Activated T-helper 2 cell treated with anti-CD3 and anti-CD28 coated beads, Interferon-gamma antibody, Interleukin-2, Interleukin-4, amounts not matched to agents 10 μg/mL and 5 μg/mL and 100 μg/mL, durations not matched to agents 14 hours and 24 hours and 36 hours (primary cell): ENCODE measurements at regions of chr2 and their contacts with region 1.

Region 1: GRCh38 chr2:216666461-216667233 is 28.7 kb downstream of the IGFBP5 start:
- DNase-seq: peak; percentile 59
- H3K4me3 Mint-ChIP-seq: no peak overlapping the region
- H3K27ac Mint-ChIP-seq: no peak overlapping the region
- H3K4me1 Mint-ChIP-seq: no peaks in the 10 kb centered on the region
- H3K27me3 Mint-ChIP-seq: peaks cover 8% of the 10 kb centered on the region

Region 2: GRCh38 chr2:216412022-216412999 is 254.3 kb before region 1 on chr2 and contains the start of gene SMARCAL1:
- intact Hi-C with region 1: loop called (anchors 5 kb)
- DNase-seq: peak; percentile 97
- H3K4me3 Mint-ChIP-seq: peak within 1 kb of the TSS; percentile 98
- H3K27ac Mint-ChIP-seq: peak within 1 kb of the TSS; percentile 94
- H3K4me1 Mint-ChIP-seq: peaks cover 19% of the 10 kb centered on the region
- H3K27me3 Mint-ChIP-seq: peaks cover 13% of the 10 kb centered on the region
- total RNA-seq, gene SMARCAL1: 32.8 and 34.1 TPM in 2 replicates

Region 3: GRCh38 chr2:216519154-216519762 is 147.4 kb before region 1 on chr2:
- intact Hi-C with region 1: loop called (anchors 1 kb)
- DNase-seq: peak; percentile 32
- H3K4me3 Mint-ChIP-seq: no peak overlapping the region
- H3K27ac Mint-ChIP-seq: no peak overlapping the region
- H3K4me1 Mint-ChIP-seq: no peaks in the 10 kb centered on the region
- H3K27me3 Mint-ChIP-seq: no peaks in the 10 kb centered on the region

Region 4: DNA sequence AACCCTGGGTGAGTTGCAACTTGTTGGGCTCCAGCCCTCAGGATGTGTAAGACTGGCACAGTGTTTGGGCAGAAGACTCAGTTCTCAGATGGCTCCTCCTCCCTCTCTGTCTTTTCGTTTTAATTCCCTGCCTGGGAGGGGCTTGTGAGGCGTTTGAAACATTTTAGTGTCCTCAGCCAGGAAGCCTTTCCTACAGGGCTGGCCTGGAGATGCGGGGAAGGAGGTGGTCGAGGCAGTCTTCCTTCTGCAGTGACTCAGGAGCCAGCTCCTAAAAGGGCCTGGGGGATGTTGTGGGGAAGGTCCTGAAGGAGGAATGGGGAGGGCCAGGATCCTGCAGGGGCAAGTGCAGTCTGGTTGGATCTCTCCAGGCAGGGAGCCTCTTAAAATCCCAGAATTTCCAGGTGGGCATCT is 50.8 kb after region 1 on chr2:
- intact Hi-C with region 1: no loop called
- DNase-seq: no peak
- H3K4me3 Mint-ChIP-seq: no peak overlapping the region
- H3K27ac Mint-ChIP-seq: no peak overlapping the region
- H3K4me1 Mint-ChIP-seq: no peaks in the 10 kb centered on the region
- H3K27me3 Mint-ChIP-seq: peaks cover 3% of the 10 kb centered on the region

Region 5: GRCh38 chr2:217064234-217065024 is 397.8 kb after region 1 on chr2:
- intact Hi-C with region 1: no loop called
- DNase-seq: no peak
- H3K4me3 Mint-ChIP-seq: no peak overlapping the region
- H3K27ac Mint-ChIP-seq: no peak overlapping the region
- H3K4me1 Mint-ChIP-seq: no peaks in the 10 kb centered on the region
- H3K27me3 Mint-ChIP-seq: peaks cover 3% of the 10 kb centered on the region